Activated CD4-positive, alpha-beta T cell treated with anti-CD3 and anti-CD28 coated beads, Interleukin-2, amount 10 ng/mL, durations not matched to agents 24 days and 14 days (primary cell): ENCODE measurements at regions of chr17 and their contacts with region 1.

Region 1: GRCh38 chr17:66364990-66365490 is 62.6 kb downstream of the PRKCA start:
- DNase-seq: peak; percentile 70
- H3K4me3 Mint-ChIP-seq: peak overlapping the region; percentile 49
- H3K27ac Mint-ChIP-seq: peak overlapping the region; percentile 91
- H3K4me1 Mint-ChIP-seq: peaks cover 68% of the 10 kb centered on the region
- H3K27me3 Mint-ChIP-seq: no peaks in the 10 kb centered on the region

Region 2: DNA sequence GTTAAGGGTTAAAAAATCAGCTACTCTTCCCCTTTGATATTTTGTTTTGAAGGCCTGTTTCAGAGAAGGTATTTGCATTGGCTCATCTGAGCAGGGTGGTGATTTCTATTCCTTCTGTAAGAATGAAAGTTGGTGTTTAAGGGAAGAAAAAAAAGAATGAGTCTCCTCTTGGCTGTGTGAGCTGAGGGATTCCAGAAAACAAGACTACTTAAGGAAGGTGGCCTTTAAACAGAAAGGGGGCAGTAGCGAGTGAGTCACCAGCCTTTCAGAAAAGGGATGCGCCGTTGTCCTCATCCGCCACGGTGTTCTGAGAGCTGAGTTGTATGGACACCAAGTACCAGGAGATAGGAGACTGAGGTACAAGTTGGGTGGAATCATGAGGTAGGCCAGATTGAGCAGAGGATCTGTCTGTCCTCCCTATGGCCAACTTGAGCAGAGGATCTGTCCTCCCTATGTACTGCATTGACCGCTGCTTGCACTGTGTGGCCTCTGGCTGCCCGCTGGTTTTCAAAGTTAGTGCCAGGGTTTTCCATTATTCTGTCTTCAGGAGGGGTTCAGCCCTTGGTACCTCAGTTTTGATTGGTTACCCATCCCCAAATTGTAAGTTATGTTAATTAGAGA is 54.4 kb before region 1 on chr17:
- intact Hi-C with region 1: loop called (anchors 1 kb)
- DNase-seq: no peak
- H3K4me3 Mint-ChIP-seq: peak overlapping the region; percentile 77
- H3K27ac Mint-ChIP-seq: peak overlapping the region; percentile 80
- H3K4me1 Mint-ChIP-seq: peaks cover 82% of the 10 kb centered on the region
- H3K27me3 Mint-ChIP-seq: no peaks in the 10 kb centered on the region

Region 3: GRCh38 chr17:66331038-66331816 is 33.8 kb before region 1 on chr17:
- intact Hi-C with region 1: loop called (anchors 5 kb)
- DNase-seq: peak; percentile 79
- H3K4me3 Mint-ChIP-seq: peak overlapping the region; percentile 80
- H3K27ac Mint-ChIP-seq: peak overlapping the region; percentile 94
- H3K4me1 Mint-ChIP-seq: peaks cover 60% of the 10 kb centered on the region
- H3K27me3 Mint-ChIP-seq: no peaks in the 10 kb centered on the region

Region 4: GRCh38 chr17:66383333-66383732 is 18.3 kb after region 1 on chr17:
- intact Hi-C with region 1: loop called (anchors 2 kb)
- DNase-seq: no peak
- H3K4me3 Mint-ChIP-seq: no peak overlapping the region
- H3K27ac Mint-ChIP-seq: peak overlapping the region; percentile 66
- H3K4me1 Mint-ChIP-seq: peaks cover 53% of the 10 kb centered on the region
- H3K27me3 Mint-ChIP-seq: no peaks in the 10 kb centered on the region

Region 5: DNA sequence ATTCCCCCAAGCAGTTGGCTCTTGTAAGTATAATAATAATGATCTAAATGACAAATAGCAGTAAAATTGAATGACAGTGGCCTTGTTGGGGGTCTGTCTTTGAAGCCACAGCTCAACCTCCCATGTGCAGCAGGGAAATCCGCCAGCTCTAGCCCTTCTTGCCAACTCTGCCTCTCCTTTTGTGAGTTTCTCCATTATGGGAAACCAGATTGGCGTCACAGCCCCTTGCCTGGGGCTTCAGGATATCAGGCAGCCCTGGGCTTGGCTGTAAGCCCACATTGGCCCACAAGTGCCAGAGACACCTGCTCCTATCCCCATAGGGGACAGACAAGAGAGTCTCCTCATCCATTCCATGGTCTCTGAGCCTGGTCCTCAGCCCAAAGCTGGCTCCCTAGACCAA is 399.5 kb after region 1 on chr17:
- intact Hi-C with region 1: no loop called
- DNase-seq: no peak
- H3K4me3 Mint-ChIP-seq: no peak overlapping the region
- H3K27ac Mint-ChIP-seq: no peak overlapping the region
- H3K4me1 Mint-ChIP-seq: peaks cover 2% of the 10 kb centered on the region
- H3K27me3 Mint-ChIP-seq: no peaks in the 10 kb centered on the region